GM13976 (cell line): ENCODE measurements at regions of chr7 and their contacts with region 1.

Region 1: DNA sequence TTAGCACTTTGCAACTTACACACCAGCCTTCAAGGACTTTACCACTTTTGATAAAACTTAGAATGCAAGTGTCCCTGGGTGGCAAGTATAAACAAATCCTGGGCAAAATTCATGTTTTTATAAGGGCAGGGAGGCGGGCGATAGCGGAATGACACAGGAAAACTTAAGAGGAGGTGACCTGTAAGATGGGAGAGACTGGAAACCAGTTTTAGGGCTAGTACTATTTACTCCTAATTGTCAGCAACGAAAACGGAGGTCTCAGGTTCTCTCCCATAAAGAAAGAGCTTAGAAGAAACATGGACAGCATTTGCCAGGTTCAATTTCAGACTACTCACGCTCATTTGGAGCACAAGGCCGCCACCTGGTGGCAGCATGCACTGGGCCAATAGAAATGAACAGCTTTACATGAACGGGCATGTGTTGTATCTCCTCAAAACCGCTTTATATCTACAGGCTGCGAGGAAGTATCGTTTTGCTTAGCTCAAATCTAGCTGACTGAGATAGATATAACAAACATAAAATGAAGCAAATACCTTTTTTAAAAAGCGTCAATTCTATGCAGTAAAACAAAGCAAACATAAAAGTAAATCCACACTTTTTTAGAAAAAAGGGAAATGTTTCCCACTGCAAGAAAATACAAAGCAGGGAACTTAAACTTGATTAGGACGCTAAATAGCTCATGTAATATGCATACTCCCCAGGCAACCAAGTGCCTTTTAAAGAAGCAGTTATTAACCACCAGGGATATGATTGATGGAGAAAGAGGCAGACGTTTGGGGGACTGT is 37.6 kb upstream of the SVOPL start:
- DNase-seq: peak; percentile 79
- CTCF ChIP-seq: peak; percentile 95

Region 2: GRCh38 chr7:138170959-138171703 is 567.6 kb before region 1 on chr7:
- in situ Hi-C with region 1: loop called (anchors 10 kb)
- DNase-seq: peak; percentile 29
- CTCF ChIP-seq: no peak

Region 3: DNA sequence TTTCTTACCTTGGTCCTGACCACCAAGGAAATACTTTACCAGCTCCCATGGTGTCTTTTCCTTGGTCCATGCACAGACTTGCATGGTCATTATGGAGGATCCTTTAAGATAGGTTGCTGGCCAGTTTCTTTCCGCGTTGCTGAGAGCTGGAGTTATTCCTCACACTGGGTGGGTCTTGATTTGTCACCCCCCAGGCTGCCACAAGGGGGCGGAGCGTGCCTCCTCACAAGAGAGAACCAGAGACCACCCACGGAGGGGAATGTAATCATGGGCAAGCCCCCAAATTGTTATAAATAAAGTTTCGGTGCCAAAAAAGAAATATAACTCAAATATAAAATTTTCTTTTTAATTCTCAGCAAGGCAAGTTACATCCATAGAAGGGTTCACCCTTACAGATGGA is 289.2 kb before region 1 on chr7:
- in situ Hi-C with region 1: loop called (anchors 25 kb)
- DNase-seq: no peak
- CTCF ChIP-seq: peak; percentile 37

Region 4: DNA sequence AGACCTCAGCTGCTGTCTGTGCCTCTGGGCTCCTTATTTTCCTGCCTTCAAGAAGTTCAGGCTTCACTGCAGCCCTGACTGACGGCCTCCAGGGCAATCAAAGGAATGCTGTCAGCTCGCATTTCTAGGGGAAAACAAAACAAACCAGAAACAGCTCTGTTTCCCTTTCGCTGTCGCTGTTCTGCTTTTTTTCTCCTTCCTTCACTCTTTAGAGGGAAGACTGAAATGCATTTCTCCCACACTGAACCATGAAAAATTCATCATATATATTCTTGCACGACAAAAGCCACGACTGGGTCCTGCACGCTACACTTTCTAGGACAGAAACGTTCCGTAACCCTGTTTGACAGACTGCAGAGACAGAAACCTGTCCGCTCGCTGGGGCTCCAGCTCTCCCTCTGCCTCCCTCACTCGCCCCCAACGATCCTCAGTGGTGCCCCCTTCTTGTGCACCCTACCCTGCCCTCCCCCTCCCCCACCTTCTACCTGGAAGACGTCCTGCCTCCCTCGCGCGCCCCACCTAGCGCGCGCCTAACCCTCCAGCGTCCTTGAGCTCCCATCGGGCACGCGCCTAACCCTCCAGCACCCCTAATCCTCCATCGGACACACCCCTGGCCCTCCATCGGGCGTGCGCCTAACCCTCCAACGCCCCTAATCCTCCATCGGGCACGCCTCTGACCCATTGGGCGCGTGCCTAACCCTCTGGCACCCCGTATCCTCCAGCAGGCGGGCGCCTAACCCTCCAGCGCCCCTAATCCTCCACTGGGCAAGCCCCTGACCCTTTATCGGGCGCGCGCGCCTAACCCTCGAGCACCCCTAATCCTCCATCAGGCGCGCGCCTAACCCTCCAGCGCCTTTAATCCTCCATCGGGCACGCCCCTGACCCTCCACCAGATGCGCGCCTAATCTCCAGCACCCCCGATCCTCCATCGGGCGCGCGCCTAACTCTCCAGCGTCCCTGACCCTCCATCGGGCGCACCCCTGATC is 74.7 kb before region 1 on chr7:
- in situ Hi-C with region 1: no loop called
- DNase-seq: no peak
- CTCF ChIP-seq: no peak